Naive thymus-derived CD4-positive, alpha-beta T cell (primary cell): ENCODE measurements at regions of chr13 and their contacts with region 1.

Region 1: GRCh38 chr13:32427852-32428580 is at the start of gene N4BP2L1:
- DNase-seq: peak; percentile 60 to 91 (median 78)
- ATAC-seq: peak; percentile 81
- H3K4me3 ChIP-seq: peak within 1 kb of the TSS; percentile 64
- H3K4me3 Mint-ChIP-seq: peak within 1 kb of the TSS; percentile 90 to 100 (median 94)
- H3K27ac ChIP-seq: peak within 1 kb of the TSS; percentile 98
- H3K27ac Mint-ChIP-seq: peak within 1 kb of the TSS; percentile 95 to 99 (median 97)
- H3K4me1 ChIP-seq: peaks cover 19 to 20% of the 10 kb centered on the region in 2 donors
- H3K4me1 Mint-ChIP-seq: peaks cover 34 to 50% (median 48%) of the 10 kb centered on the region in 7 donors
- H3K27me3 ChIP-seq: no peaks in the 10 kb centered on the region
- H3K27me3 Mint-ChIP-seq: no peaks in the 10 kb centered on the region
- total RNA-seq, gene N4BP2L1: 30.4 to 58.0 (median 47.1) TPM

Region 2: DNA sequence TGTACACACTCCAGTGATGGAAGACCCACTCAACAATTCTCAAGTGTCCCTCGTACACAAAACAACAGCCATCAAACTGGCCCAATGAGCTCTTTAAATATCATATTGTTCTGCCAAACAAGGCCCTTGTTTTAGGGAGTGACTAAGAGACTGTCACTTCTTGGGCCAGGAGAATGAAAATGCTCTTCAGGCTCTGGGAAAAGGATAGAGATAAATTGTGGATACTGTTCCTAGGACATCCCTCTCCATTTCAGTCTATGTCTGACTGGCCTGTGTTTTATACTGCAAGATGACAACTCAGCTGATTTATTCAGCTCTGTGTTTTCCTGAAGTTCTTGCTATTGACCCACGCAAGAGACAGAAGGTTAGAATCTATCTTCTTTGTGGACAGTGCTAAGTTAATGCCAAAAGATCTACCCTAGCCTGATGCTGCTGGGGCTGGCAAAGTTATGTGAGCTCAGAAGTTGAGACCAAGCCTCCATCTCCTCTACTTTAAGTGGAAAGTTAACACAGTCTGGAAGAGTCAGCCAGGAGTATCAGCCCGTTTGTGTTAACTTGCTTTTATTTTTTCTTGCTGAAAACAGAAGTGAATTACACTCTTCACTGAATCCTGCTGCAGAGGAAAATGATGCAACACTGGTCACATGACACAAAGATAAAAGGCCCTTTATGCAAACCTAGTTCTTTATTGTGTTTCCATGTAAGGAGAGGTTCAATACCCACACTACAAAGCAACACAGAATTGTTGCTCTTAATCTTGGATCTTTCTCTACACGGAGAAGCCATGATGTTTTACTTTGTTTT is 381.8 kb before region 1 on chr13:
- CTCF ChIA-PET with region 1: no interaction called
- POLR2A ChIA-PET with region 1: no interaction called
- intact Hi-C with region 1: loop called in 1 of 2 experiments (anchors 2 kb)
- DNase-seq: peak in 6 of 9 donors; percentile 24 to 55 (median 51)
- ATAC-seq: peak; percentile 65
- H3K4me3 ChIP-seq: no peak overlapping the region
- H3K4me3 Mint-ChIP-seq: peak overlapping the region in 9 of 10 donors; percentile 20 to 72 (median 65)
- H3K27ac ChIP-seq: no peak overlapping the region
- H3K27ac Mint-ChIP-seq: peak overlapping the region; percentile 23 to 86 (median 76)
- H3K4me1 ChIP-seq: peaks cover 0 to 48% of the 10 kb centered on the region in 2 donors
- H3K4me1 Mint-ChIP-seq: peaks cover 10 to 79% (median 62%) of the 10 kb centered on the region in 7 donors
- H3K27me3 ChIP-seq: no peaks in the 10 kb centered on the region
- H3K27me3 Mint-ChIP-seq: peaks cover 0 to 15% (median 0%) of the 10 kb centered on the region in 5 donors

Region 3: GRCh38 chr13:32381539-32381938 is 46.5 kb before region 1 on chr13:
- CTCF ChIA-PET with region 1: no interaction called
- POLR2A ChIA-PET with region 1: no interaction called
- intact Hi-C with region 1: loop called (anchors 5 kb)
- DNase-seq: peak in 6 of 9 donors; percentile 5 to 41 (median 24)
- ATAC-seq: peak; percentile 73
- H3K4me3 ChIP-seq: no peak overlapping the region
- H3K4me3 Mint-ChIP-seq: no peak overlapping the region
- H3K27ac ChIP-seq: no peak overlapping the region
- H3K27ac Mint-ChIP-seq: no peak overlapping the region
- H3K4me1 ChIP-seq: no peaks in the 10 kb centered on the region
- H3K4me1 Mint-ChIP-seq: peaks cover 0 to under 1% (median 0%) of the 10 kb centered on the region in 7 donors
- H3K27me3 ChIP-seq: no peaks in the 10 kb centered on the region
- H3K27me3 Mint-ChIP-seq: no peaks in the 10 kb centered on the region